ENCODE measurements at regions of chr3 and their contacts with region 1.

Region 1: GRCh38 chr3:11385891-11386290 is 113.7 kb downstream of the ATG7 start:
- DNase-seq: no peak
- ATAC-seq: peak in 1 of 4 donors; percentile 74
- H3K4me3 ChIP-seq: no peak overlapping the region
- H3K27ac ChIP-seq: peak overlapping the region in 1 of 12 donors; percentile 28
- H3K4me1 ChIP-seq: peaks cover 0 to 31% (median 21%) of the 10 kb centered on the region in 12 donors
- H3K27me3 ChIP-seq: no peaks in the 10 kb centered on the region
- CTCF ChIP-seq: no peak
- POLR2A ChIP-seq: no peak

Region 2: GRCh38 chr3:11335056-11335608 is 50.8 kb before region 1 on chr3:
- intact Hi-C with region 1: no loop called
- DNase-seq: no peak
- ATAC-seq: peak in 3 of 4 donors; percentile 48 to 67 (median 59)
- H3K4me3 ChIP-seq: no peak overlapping the region
- H3K27ac ChIP-seq: no peak overlapping the region
- H3K4me1 ChIP-seq: no peaks in the 10 kb centered on the region
- H3K27me3 ChIP-seq: no peaks in the 10 kb centered on the region
- CTCF ChIP-seq: peak; percentile 42 to 75 (median 60)
- POLR2A ChIP-seq: no peak

Region 3: GRCh38 chr3:11434017-11434526 is 48.2 kb after region 1 on chr3:
- intact Hi-C with region 1: loop called in 1 of 10 experiments (anchors 10 kb)
- DNase-seq: peak; percentile 51 to 70 (median 57)
- ATAC-seq: peak; percentile 65 to 91 (median 84)
- H3K4me3 ChIP-seq: no peak overlapping the region
- H3K27ac ChIP-seq: peak overlapping the region; percentile 5 to 68 (median 46)
- H3K4me1 ChIP-seq: peaks cover 0 to 36% (median 16%) of the 10 kb centered on the region in 12 donors
- H3K27me3 ChIP-seq: no peaks in the 10 kb centered on the region
- CTCF ChIP-seq: no peak
- POLR2A ChIP-seq: no peak

Region 4: DNA sequence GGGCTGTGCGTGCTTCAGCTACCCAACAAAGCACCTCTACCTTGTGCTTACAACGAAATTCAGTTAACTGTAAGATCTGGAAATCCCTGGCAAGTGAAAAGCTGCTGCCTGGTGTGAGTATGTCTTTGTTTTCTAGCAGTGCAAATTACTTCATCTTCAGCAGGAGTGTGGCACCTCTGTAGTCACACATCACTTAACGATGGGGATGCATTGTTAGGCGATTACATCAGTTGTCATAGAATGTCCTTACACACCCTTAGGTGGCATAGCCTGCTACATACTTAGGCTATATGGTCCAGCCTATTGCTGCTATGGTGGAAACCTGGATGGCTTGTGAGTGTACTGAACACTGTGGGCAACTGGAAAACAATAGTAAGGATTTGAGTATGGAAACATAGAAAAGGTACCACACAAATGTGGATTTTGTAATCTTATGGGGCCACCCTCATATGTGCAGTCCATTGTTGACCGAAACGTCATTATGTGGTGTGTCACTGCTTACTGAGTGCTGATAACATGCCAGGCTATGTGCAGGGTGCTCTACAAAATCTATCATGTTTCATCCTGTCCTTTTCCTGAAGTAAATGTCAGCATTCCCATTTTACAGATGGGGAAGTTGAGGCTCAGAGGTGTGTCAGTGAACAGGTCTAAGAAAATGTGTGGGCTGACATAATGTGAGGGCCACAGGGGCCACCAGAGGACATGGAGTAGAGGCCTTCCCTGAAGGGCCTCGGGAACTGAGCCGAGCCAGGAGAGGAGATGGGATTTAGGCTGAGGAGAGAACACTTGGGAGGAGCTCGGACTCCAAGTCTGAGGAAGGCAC is 84.4 kb after region 1 on chr3:
- intact Hi-C with region 1: no loop called
- DNase-seq: no peak
- ATAC-seq: no peak
- H3K4me3 ChIP-seq: no peak overlapping the region
- H3K27ac ChIP-seq: no peak overlapping the region
- H3K4me1 ChIP-seq: peaks cover 0 to 24% (median 17%) of the 10 kb centered on the region in 12 donors
- H3K27me3 ChIP-seq: no peaks in the 10 kb centered on the region
- CTCF ChIP-seq: no peak
- POLR2A ChIP-seq: no peak

Region 5: DNA sequence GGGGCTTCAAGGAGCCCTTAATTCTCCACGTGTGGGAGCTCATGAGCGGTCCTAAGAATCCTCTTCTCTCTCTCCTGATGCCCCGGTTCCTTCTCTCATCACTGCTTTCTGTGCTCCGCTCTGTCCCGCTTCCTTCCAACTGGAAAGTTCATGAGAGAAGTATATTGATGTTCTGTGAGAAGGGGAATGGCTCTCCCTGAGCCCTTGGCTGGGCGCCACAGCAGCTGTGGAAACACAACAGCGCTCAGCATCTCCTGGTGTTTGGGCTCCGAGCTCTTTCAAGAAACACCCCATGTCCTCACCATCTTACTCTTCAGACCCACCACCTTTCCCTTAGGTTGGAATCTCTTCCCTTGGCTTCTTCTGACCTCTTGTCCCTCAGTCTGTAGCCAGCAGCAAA is 96.1 kb after region 1 on chr3:
- intact Hi-C with region 1: no loop called
- DNase-seq: peak; percentile 72 to 90 (median 81)
- ATAC-seq: peak; percentile 28 to 70 (median 54)
- H3K4me3 ChIP-seq: no peak overlapping the region
- H3K27ac ChIP-seq: peak overlapping the region in 11 of 12 donors; percentile 51 to 80 (median 65)
- H3K4me1 ChIP-seq: peaks cover 4 to 43% (median 37%) of the 10 kb centered on the region in 12 donors
- H3K27me3 ChIP-seq: no peaks in the 10 kb centered on the region
- CTCF ChIP-seq: no peak
- POLR2A ChIP-seq: no peak

Region 6: GRCh38 chr3:11556851-11557644 is 171.2 kb after region 1 on chr3:
- intact Hi-C with region 1: loop called in 2 of 10 experiments (anchors 10 kb)
- DNase-seq: peak; percentile 62 to 78 (median 73)
- ATAC-seq: peak in 2 of 4 donors; percentile 28 to 29
- H3K4me3 ChIP-seq: no peak overlapping the region
- H3K27ac ChIP-seq: peak overlapping the region in 11 of 12 donors; percentile 20 to 78 (median 54)
- H3K4me1 ChIP-seq: peaks cover 15 to 91% (median 73%) of the 10 kb centered on the region in 12 donors
- H3K27me3 ChIP-seq: no peaks in the 10 kb centered on the region
- CTCF ChIP-seq: no peak
- POLR2A ChIP-seq: no peak

Region 7: DNA sequence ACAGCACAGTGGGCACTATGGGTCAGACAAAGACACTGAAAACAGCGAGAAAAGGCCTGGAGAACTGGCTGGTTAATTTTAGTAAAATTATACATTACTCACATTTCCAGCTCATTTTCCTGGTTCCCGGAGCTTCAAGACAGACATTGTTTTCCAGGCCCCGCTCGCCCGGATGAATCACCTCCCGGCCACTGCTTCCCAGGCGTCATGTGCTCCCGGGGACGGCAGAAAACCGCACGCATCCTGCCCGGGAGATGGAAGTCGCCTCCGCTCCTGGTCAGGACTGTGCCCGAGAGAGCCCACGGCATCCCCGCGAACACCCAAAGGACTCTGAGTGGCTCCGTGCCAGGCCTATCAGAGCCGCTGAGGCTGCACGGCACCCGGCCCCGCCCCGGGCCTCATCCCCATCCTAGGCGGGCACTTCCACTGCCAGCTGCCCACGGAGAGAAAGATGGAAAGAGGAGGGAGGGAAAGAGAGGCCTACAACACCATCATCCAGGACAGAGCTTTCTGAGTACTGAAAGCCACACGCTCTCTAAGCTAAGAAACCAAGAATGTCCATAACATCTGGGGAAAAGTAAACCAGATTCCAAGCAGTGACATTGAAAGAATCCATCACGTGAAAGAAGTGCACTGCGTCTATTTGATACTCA is 182.7 kb after region 1 on chr3:
- intact Hi-C with region 1: loop called in 1 of 10 experiments (anchors 10 kb)
- DNase-seq: peak; percentile 79 to 90 (median 81)
- ATAC-seq: peak; percentile 37 to 76 (median 68)
- H3K4me3 ChIP-seq: peak overlapping the region in 9 of 12 donors; percentile 22 to 48 (median 32)
- H3K27ac ChIP-seq: peak overlapping the region; percentile 18 to 96 (median 86)
- H3K4me1 ChIP-seq: peaks cover 9 to 82% (median 59%) of the 10 kb centered on the region in 12 donors
- H3K27me3 ChIP-seq: no peaks in the 10 kb centered on the region
- CTCF ChIP-seq: no peak
- POLR2A ChIP-seq: no peak

Measured in heart left ventricle (tissue), 16 donors.